Activated T-helper 1 cell treated with anti-CD3 and anti-CD28 coated beads, Interleukin-12 subunit alpha, Interleukin-12 subunit beta, Interleukin-2, Interleukin-4 antibody, amounts not matched to agents 30 ng/mL and 10 ng/mL and 1 ng/mL, durations not matched to agents 14 hours and 24 hours and 36 hours (primary cell): ENCODE measurements at regions of chr10 and their contacts with region 1.

Region 1: GRCh38 chr10:110504111-110504735 is 6.5 kb downstream of the DUSP5 start:
- DNase-seq: peak; percentile 77
- H3K4me3 Mint-ChIP-seq: peak overlapping the region; percentile 100
- H3K27ac Mint-ChIP-seq: peak overlapping the region; percentile 97
- H3K4me1 Mint-ChIP-seq: peaks cover 97% of the 10 kb centered on the region
- H3K27me3 Mint-ChIP-seq: no peaks in the 10 kb centered on the region

Region 2: DNA sequence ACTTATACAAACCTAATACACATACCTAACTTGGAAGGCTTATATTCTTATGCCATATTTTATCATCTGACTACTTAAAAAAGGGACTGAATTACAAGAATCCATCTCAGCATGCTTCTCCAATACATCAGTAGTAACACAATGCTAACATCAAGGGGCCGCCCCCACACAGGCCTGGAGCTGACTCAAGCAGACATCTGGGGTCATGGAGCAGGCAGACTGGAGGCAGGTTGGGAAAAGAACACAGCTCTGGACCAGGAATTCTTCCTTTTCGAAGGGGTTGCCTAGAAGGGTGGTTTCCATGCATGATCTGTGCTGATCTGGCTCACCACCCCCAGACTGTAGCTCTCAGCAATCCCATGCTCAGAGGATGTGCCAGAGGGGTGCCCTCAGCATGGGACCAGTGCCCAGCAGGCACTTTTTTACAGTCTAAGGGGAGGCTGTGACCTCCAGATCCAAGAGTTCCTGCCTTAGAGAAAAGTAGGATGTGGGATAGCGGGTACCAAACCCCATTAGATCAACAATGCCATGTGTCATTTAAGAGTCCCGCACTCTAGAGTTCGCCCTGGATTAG is 32.6 kb before region 1 on chr10:
- intact Hi-C with region 1: no loop called
- DNase-seq: no peak
- H3K4me3 Mint-ChIP-seq: no peak overlapping the region
- H3K27ac Mint-ChIP-seq: no peak overlapping the region
- H3K4me1 Mint-ChIP-seq: no peaks in the 10 kb centered on the region
- H3K27me3 Mint-ChIP-seq: peaks cover 2% of the 10 kb centered on the region

Region 3: DNA sequence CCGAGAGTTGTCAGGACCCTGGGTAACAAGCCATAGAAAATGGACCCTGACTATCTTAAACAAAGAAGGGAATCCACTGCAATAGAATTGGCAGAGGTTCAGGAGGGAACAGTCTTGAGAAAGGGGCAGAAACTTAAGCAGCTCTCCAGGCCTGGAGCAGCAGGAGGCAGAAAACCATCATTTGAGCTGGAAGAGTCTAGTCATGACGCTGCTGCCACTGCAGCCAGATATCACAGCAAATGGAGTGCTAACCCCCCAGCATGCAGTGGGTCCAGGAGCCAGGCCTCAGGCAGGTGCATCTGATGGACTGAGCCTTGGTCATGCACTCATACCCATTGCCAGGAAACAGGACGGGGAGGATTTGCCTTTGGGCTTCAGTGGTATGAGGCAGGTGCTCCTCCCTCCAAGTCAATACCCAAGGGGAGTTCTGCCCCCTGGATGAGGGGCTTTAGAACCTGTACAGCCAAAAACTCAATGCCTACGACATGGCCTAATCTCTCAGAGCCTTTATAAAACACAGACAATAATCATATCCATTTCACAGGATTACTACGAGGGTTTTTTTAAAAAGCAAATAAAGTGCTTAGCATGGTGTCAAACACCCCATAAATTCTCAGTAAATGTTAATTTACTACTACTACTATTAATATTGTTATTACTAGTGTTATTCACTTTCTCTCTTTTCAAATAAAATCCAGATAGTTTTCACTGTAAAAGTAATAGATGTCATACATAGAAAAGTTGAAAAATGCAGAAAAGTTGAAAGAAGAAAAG is 24.2 kb after region 1 on chr10:
- intact Hi-C with region 1: loop called (anchors 1 kb)
- DNase-seq: no peak
- H3K4me3 Mint-ChIP-seq: peak overlapping the region; percentile 64
- H3K27ac Mint-ChIP-seq: peak overlapping the region; percentile 94
- H3K4me1 Mint-ChIP-seq: peaks cover 83% of the 10 kb centered on the region
- H3K27me3 Mint-ChIP-seq: no peaks in the 10 kb centered on the region

Region 4: DNA sequence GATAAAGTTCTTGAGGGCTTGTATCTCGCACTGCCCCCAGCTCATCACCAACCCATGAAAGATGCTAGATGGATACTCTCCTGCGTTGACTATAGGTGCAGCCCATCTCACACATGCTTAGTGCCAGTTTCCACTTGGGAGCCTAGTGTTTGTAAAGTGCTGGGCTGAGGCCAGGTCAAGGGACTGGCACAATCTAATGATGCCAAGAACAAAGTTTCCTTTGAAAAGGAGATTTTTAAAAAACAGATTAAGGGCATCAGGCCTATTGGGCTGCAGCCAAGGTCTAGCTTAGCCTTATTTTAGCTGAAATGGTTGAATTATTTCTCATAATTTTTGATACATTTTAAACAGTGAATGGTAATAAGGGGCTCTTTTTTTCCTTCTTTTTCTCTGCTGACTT is 831.6 kb after region 1 on chr10:
- intact Hi-C with region 1: no loop called
- DNase-seq: no peak
- H3K4me3 Mint-ChIP-seq: no peak overlapping the region
- H3K27ac Mint-ChIP-seq: no peak overlapping the region
- H3K4me1 Mint-ChIP-seq: no peaks in the 10 kb centered on the region
- H3K27me3 Mint-ChIP-seq: no peaks in the 10 kb centered on the region